MCF 10A (cell line): ENCODE measurements at regions of chr5 and their contacts with region 1.

Region 1: GRCh38 chr5:135466178-135467050 is 14.3 kb upstream of the TIFAB start:
- DNase-seq: peak; percentile 78
- H3K4me3 Mint-ChIP-seq: no peak overlapping the region
- H3K27ac Mint-ChIP-seq: no peak overlapping the region
- H3K4me1 Mint-ChIP-seq: peaks cover 5% of the 10 kb centered on the region
- H3K27me3 Mint-ChIP-seq: peaks cover 12% of the 10 kb centered on the region
- CTCF ChIP-seq: peak; percentile 99

Region 2: DNA sequence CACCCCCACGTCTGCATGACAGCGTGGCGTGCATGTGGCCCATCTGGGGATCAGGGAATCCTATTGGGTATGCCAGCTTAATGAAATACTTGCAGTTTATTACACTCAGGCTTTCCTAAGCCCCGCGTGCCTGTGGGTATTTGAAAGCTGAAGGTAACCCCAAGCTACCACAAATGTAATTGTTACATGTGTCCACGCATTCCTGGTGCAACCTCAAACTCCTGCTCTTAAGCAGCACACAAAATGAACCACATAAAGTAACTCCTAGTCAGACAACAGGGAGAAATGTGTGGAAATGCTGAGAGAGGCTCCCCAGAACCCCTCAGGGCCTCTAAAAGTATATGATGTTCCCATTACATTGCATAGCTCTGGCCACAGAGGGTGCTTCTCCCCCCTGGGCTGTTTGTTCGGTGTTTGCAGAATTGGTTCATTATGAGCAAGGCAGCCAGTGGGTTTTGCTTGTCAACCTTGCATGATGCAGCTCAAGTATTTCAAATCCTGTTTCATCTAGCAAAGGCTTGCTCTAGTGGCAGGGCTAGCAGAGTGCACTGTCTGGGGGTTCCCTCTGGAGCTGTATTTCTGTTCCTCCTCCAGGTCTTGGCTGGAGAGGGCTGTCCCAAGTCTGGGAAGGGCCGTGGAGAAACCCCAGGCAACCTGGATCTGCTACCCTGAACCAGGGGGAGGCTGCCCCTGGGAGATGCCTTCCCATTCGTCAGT is 17.5 kb before region 1 on chr5:
- CTCF ChIA-PET with region 1: interaction called, 64 read pairs
- POLR2A ChIA-PET with region 1: interaction called, 4 read pairs
- intact Hi-C with region 1: no loop called
- DNase-seq: no peak
- H3K4me3 Mint-ChIP-seq: no peak overlapping the region
- H3K27ac Mint-ChIP-seq: no peak overlapping the region
- H3K4me1 Mint-ChIP-seq: peaks cover 6% of the 10 kb centered on the region
- H3K27me3 Mint-ChIP-seq: peaks cover 13% of the 10 kb centered on the region
- CTCF ChIP-seq: no peak

Region 3: DNA sequence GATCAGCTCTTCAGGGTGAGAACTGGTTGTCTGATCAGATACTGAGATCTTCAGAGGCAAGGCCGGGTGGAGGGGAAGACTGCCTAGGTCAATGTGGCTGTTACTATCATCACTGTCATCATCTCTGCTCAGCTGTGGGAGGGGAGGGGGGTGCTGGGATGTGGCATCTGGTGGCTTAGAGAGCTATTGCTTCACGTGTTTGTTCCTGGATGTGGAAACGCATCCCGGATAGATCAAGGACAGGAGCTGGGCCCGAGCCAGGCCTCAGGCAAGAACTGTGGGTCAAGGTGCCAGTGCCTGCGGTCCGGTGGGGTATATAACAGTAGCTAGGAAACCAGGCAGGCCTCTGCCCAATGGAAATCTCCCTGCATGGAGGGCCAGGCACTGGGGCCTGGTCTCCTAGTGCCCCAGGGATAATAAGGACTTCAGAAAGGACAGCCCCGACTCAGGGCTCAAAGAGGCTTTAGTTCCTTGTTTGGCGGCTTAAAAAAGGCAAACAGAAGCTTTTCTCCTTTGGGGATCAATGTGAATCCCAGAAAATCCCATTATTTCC is 16.0 kb after region 1 on chr5:
- CTCF ChIA-PET with region 1: interaction called, 114 read pairs
- POLR2A ChIA-PET with region 1: interaction called, 6 read pairs
- intact Hi-C with region 1: no loop called
- DNase-seq: no peak
- H3K4me3 Mint-ChIP-seq: no peak overlapping the region
- H3K27ac Mint-ChIP-seq: no peak overlapping the region
- H3K4me1 Mint-ChIP-seq: peaks cover 3% of the 10 kb centered on the region
- H3K27me3 Mint-ChIP-seq: no peaks in the 10 kb centered on the region
- CTCF ChIP-seq: no peak

Region 4: GRCh38 chr5:135501965-135502364 is 35.6 kb after region 1 on chr5:
- CTCF ChIA-PET with region 1: interaction called, 37 read pairs
- POLR2A ChIA-PET with region 1: no interaction called
- intact Hi-C with region 1: no loop called
- DNase-seq: no peak
- H3K4me3 Mint-ChIP-seq: no peak overlapping the region
- H3K27ac Mint-ChIP-seq: no peak overlapping the region
- H3K4me1 Mint-ChIP-seq: peaks cover 25% of the 10 kb centered on the region
- H3K27me3 Mint-ChIP-seq: no peaks in the 10 kb centered on the region
- CTCF ChIP-seq: no peak

Region 5: DNA sequence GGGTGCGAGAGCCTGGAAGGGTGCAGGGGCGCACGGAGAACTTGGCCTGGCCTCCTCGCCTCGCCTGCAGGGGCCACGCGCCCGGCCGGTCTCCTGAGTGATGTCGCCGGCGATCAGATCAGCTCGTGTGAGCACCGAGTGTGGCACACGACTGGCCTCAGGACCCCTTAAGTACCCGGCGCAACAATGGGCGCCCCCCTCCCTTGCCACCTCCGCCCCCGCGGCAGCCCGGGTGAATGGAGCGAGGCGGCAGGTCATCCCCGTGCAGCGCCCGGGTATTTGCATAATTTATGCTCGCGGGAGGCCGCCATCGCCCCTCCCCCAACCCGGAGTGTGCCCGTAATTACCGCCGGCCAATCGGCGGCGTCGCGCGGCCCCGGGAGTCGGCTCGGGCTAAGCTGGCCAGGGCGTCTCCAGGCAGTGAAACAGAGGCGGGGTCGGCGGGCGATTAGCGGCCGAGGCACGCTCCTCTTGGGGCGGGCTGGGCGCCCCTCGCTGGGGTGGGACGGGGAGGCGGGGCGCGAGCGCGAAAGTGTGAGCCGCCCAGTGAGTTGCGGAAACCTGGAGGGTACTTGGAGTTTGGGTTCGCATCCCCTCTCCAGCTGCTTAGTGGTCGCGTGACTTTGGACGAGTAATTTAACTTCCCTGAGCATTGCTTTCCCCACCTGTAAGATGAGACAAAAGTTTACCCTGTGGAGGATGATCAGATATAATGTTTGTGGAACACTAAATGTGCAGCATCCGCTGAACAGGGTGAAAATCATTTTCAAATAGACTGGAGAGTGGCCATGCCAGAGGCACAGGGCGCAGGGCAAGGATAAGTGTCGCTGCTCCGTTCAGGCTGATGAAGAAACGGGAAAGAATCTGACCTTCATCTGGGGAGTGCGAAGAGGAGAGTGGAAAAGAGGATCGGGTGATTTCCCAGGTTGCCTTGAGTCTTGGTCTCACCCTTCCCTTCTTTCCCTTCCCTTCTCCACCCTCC is 69.7 kb after region 1 on chr5 and contains the start of gene NEUROG1:
- CTCF ChIA-PET with region 1: interaction called, 50 read pairs
- POLR2A ChIA-PET with region 1: no interaction called
- intact Hi-C with region 1: no loop called
- DNase-seq: no peak
- H3K4me3 Mint-ChIP-seq: no peak within 1 kb of the TSS
- H3K27ac Mint-ChIP-seq: no peak within 1 kb of the TSS
- H3K4me1 Mint-ChIP-seq: no peaks in the 10 kb centered on the region
- H3K27me3 Mint-ChIP-seq: no peaks in the 10 kb centered on the region
- CTCF ChIP-seq: no peak
- total RNA-seq, gene NEUROG1: not detected in 2 replicates

Region 6: GRCh38 chr5:135560858-135561257 is 94.4 kb after region 1 on chr5:
- CTCF ChIA-PET with region 1: interaction called, 2,166 read pairs
- POLR2A ChIA-PET with region 1: interaction called, 4 read pairs
- intact Hi-C with region 1: loop called (anchors 1 kb)
- DNase-seq: peak; percentile 91
- H3K4me3 Mint-ChIP-seq: no peak overlapping the region
- H3K27ac Mint-ChIP-seq: no peak overlapping the region
- H3K4me1 Mint-ChIP-seq: peaks cover 6% of the 10 kb centered on the region
- H3K27me3 Mint-ChIP-seq: peaks cover 37% of the 10 kb centered on the region
- CTCF ChIP-seq: peak; percentile 94

Region 7: GRCh38 chr5:135829681-135830383 is 363.4 kb after region 1 on chr5:
- CTCF ChIA-PET with region 1: interaction called, 38 read pairs
- POLR2A ChIA-PET with region 1: no interaction called
- intact Hi-C with region 1: loop called (anchors 1 kb)
- DNase-seq: peak; percentile 83
- H3K4me3 Mint-ChIP-seq: no peak overlapping the region
- H3K27ac Mint-ChIP-seq: no peak overlapping the region
- H3K4me1 Mint-ChIP-seq: peaks cover 5% of the 10 kb centered on the region
- H3K27me3 Mint-ChIP-seq: peaks cover 50% of the 10 kb centered on the region
- CTCF ChIP-seq: peak; percentile 96